ENCODE measurements at regions of chr2 and their contacts with region 1.

Region 1: GRCh38 chr2:55718165-55719008 is 24.7 kb upstream of the PNPT1 start:
- DNase-seq: peak; percentile 45 to 81 (median 52)
- ATAC-seq: peak; percentile 92
- H3K4me3 ChIP-seq: no peak overlapping the region
- H3K27ac ChIP-seq: no peak overlapping the region
- H3K4me1 ChIP-seq: no peaks in the 10 kb centered on the region
- H3K27me3 ChIP-seq: peaks cover 2 to 15% of the 10 kb centered on the region in 2 experiments; a peak in 4 of 5 replicates
- CTCF ChIP-seq: peak; percentile 74 to 88 (median 78)
- EP300 ChIP-seq: 0 out of 2 replicates have a peak, but pooled peaks have one; percentile 8
- POLR2A ChIP-seq: no peak
- RAD21 ChIP-seq: peak; percentile 89 to 90

Region 2: GRCh38 chr2:55771612-55772011 is 53.2 kb after region 1 on chr2:
- CTCF ChIA-PET with region 1: no interaction called
- POLR2A ChIA-PET with region 1: no interaction called
- in situ Hi-C with region 1: no loop called
- intact Hi-C with region 1: loop called (anchors 5 kb)
- DNase-seq: peak in 2 of 4 experiments; percentile 11 to 13
- ATAC-seq: no peak
- H3K4me3 ChIP-seq: no peak overlapping the region
- H3K27ac ChIP-seq: no peak overlapping the region
- H3K4me1 ChIP-seq: no peaks in the 10 kb centered on the region
- H3K27me3 ChIP-seq: peaks cover 0 to 3% of the 10 kb centered on the region in 2 experiments; a peak in 1 of 5 replicates
- CTCF ChIP-seq: peak in 2 of 3 experiments; percentile 33 to 68; a peak in 3 of 6 replicates
- EP300 ChIP-seq: no peak
- POLR2A ChIP-seq: no peak
- RAD21 ChIP-seq: peak; percentile 85 to 88

Region 3: GRCh38 chr2:55954306-55955035 is 236.1 kb after region 1 on chr2:
- CTCF ChIA-PET with region 1: no interaction called
- POLR2A ChIA-PET with region 1: no interaction called
- in situ Hi-C with region 1: no loop called
- intact Hi-C with region 1: loop called (anchors 2 kb)
- DNase-seq: no peak
- ATAC-seq: no peak
- H3K4me3 ChIP-seq: no peak overlapping the region
- H3K27ac ChIP-seq: no peak overlapping the region
- H3K4me1 ChIP-seq: no peaks in the 10 kb centered on the region
- H3K27me3 ChIP-seq: no peaks in the 10 kb centered on the region
- CTCF ChIP-seq: no peak
- EP300 ChIP-seq: no peak
- POLR2A ChIP-seq: no peak
- RAD21 ChIP-seq: no peak

Region 4: GRCh38 chr2:56009758-56010458 is 291.5 kb after region 1 on chr2:
- CTCF ChIA-PET with region 1: interaction called, 22 read pairs
- POLR2A ChIA-PET with region 1: no interaction called
- in situ Hi-C with region 1: loop called (anchors 5 kb)
- intact Hi-C with region 1: loop called (anchors 1 kb)
- DNase-seq: peak in 2 of 4 experiments; percentile 12 to 21
- ATAC-seq: no peak
- H3K4me3 ChIP-seq: no peak overlapping the region
- H3K27ac ChIP-seq: no peak overlapping the region
- H3K4me1 ChIP-seq: no peaks in the 10 kb centered on the region
- H3K27me3 ChIP-seq: no peaks in the 10 kb centered on the region
- CTCF ChIP-seq: peak in 2 of 3 experiments; percentile 25 to 66; a peak in 3 of 6 replicates
- EP300 ChIP-seq: no peak
- POLR2A ChIP-seq: no peak
- RAD21 ChIP-seq: peak; percentile 73 to 78

Region 5: GRCh38 chr2:57497489-57498096 is 1779.2 kb after region 1 on chr2:
- CTCF ChIA-PET with region 1: interaction called, 3 read pairs
- POLR2A ChIA-PET with region 1: no interaction called
- in situ Hi-C with region 1: loop called (anchors 25 kb)
- intact Hi-C with region 1: loop called (anchors 5 kb)
- DNase-seq: peak; percentile 23 to 49 (median 27)
- ATAC-seq: peak; percentile 72
- H3K4me3 ChIP-seq: no peak overlapping the region
- H3K27ac ChIP-seq: no peak overlapping the region
- H3K4me1 ChIP-seq: no peaks in the 10 kb centered on the region
- H3K27me3 ChIP-seq: no peaks in the 10 kb centered on the region
- CTCF ChIP-seq: peak; percentile 47 to 66 (median 66); a peak in 5 of 6 replicates
- EP300 ChIP-seq: no peak
- POLR2A ChIP-seq: no peak
- RAD21 ChIP-seq: peak; percentile 33 to 69; a peak in 3 of 4 replicates